AG04450 (cell line): ENCODE measurements at regions of chr4 and their contacts with region 1.

Region 1: GRCh38 chr4:185183619-185184281 is 20.1 kb downstream of the CFAP97 start:
- DNase-seq: peak; percentile 84
- H3K4me3 ChIP-seq: no peak overlapping the region
- H3K27ac ChIP-seq: no peak overlapping the region
- H3K27me3 ChIP-seq: no peaks in the 10 kb centered on the region
- CTCF ChIP-seq: peak; percentile 86

Region 2: DNA sequence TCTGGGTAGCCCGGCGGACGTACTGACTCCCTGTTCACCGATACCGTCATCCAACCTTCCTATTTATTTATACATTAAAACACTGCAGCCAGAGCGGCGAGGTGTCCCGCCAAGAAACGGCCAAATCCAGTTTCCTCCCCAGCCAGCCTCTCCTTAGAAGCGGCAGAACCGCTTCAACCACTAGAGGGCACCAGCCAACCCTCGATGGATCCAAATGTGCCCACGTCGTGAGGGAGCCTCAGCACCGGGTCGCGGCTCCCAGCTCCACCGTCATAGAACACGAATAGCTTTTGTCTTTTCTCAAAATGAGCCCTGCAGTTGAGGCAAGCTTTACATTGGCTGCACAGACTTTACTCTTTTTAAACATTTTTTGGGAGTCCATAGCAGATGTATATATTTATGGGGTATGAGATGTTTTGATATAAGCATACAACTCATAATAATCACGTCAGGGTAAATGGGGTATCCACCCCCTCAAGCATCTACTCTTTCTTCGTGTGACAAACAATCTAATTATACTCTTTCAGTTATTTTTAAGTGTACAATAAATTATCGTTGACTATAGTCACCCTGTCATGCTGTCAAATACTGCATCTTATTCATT is 178.4 kb before region 1 on chr4:
- CTCF ChIA-PET with region 1: interaction called, 12 read pairs
- POLR2A ChIA-PET with region 1: no interaction called
- DNase-seq: peak; percentile 36
- H3K4me3 ChIP-seq: peak overlapping the region; percentile 39; the same call in 1 of the 2 replicates
- H3K27ac ChIP-seq: no peak overlapping the region
- H3K27me3 ChIP-seq: peaks cover 14% of the 10 kb centered on the region
- CTCF ChIP-seq: peak; percentile 96

Region 3: GRCh38 chr4:185039508-185040273 is 144.1 kb before region 1 on chr4:
- CTCF ChIA-PET with region 1: interaction called, 34 read pairs
- POLR2A ChIA-PET with region 1: no interaction called
- DNase-seq: peak; percentile 37
- H3K4me3 ChIP-seq: peak overlapping the region; percentile 38
- H3K27ac ChIP-seq: no peak overlapping the region
- H3K27me3 ChIP-seq: peaks cover 7% of the 10 kb centered on the region
- CTCF ChIP-seq: peak; percentile 90

Region 4: GRCh38 chr4:185142912-185143595 is 40.7 kb before region 1 on chr4 and contains the start of gene SLC25A4:
- CTCF ChIA-PET with region 1: interaction called, 12 read pairs
- POLR2A ChIA-PET with region 1: interaction called, 3 read pairs
- DNase-seq: peak; percentile 32
- H3K4me3 ChIP-seq: peak within 1 kb of the TSS; percentile 87
- H3K27ac ChIP-seq: no peak within 1 kb of the TSS
- H3K27me3 ChIP-seq: peaks cover 6% of the 10 kb centered on the region
- CTCF ChIP-seq: peak; percentile 38
- polyA plus RNA-seq, gene SLC25A4: 16.4 and 17.6 TPM in 2 replicates

Region 5: GRCh38 chr4:185171373-185172071 is 12.2 kb before region 1 on chr4:
- CTCF ChIA-PET with region 1: interaction called, 58 read pairs
- POLR2A ChIA-PET with region 1: no interaction called
- DNase-seq: no peak
- H3K4me3 ChIP-seq: no peak overlapping the region
- H3K27ac ChIP-seq: no peak overlapping the region
- H3K27me3 ChIP-seq: no peaks in the 10 kb centered on the region
- CTCF ChIP-seq: no peak

Region 6: GRCh38 chr4:185203486-185204237 is 19.9 kb after region 1 on chr4 and contains the start of gene CFAP97:
- CTCF ChIA-PET with region 1: interaction called, 66 read pairs
- POLR2A ChIA-PET with region 1: no interaction called
- DNase-seq: peak; percentile 77
- H3K4me3 ChIP-seq: peak within 1 kb of the TSS; percentile 68
- H3K27ac ChIP-seq: peak within 1 kb of the TSS; percentile 47
- H3K27me3 ChIP-seq: no peaks in the 10 kb centered on the region
- CTCF ChIP-seq: no peak
- polyA plus RNA-seq, gene CFAP97: 33.5 and 51.1 TPM in 2 replicates